ENCODE measurements at regions of chr2 and their contacts with region 1.

Region 1: DNA sequence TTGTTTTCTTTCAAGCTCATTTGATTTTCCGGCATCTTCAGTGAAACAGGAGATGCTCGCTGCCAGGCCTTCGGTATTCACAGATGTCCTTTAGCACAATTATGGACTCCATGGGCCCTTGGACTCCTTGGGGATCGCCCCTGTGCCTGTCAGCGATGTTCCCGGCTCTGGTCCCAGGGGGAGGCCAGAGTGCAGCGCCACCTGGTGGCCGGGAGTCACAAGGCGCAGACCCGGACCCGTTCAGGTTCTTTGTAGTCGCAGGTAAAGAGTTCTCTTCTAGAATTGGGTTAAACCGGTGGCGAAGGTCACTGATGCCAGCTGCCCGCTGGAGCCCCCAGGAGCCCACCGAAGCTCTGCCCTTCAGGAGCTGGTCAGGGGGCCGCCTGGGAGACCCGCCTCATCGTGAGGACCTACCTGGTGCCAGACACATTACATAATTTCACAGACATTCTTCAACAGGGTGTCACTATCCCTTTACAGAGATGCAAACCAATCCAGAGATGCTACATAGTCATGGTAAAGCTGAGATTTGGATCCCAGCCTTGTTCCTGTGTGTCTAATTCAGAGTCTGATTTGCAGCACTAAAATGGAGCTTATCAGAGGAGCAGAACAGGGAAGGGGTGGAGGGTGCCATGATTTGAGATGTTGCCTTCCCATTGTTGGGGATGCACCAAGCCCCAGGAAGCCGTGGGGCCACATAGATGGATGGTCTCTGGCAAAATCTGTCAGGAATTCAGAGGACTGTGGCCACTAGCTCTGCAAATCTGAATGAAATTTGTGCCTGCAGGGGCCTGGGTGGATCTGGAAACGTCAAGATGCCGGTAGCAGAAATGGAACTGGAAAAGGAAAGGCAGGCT is 6.0 kb upstream of the INPP5D start:
- DNase-seq: peak; percentile 34
- H3K4me3 ChIP-seq: no peak overlapping the region
- H3K27ac ChIP-seq: no peak overlapping the region
- H3K4me1 ChIP-seq: peaks cover 4% of the 10 kb centered on the region
- H3K27me3 ChIP-seq: no peaks in the 10 kb centered on the region
- CTCF ChIP-seq: peak; percentile 95 to 98
- POLR2A ChIP-seq: no peak

Region 2: DNA sequence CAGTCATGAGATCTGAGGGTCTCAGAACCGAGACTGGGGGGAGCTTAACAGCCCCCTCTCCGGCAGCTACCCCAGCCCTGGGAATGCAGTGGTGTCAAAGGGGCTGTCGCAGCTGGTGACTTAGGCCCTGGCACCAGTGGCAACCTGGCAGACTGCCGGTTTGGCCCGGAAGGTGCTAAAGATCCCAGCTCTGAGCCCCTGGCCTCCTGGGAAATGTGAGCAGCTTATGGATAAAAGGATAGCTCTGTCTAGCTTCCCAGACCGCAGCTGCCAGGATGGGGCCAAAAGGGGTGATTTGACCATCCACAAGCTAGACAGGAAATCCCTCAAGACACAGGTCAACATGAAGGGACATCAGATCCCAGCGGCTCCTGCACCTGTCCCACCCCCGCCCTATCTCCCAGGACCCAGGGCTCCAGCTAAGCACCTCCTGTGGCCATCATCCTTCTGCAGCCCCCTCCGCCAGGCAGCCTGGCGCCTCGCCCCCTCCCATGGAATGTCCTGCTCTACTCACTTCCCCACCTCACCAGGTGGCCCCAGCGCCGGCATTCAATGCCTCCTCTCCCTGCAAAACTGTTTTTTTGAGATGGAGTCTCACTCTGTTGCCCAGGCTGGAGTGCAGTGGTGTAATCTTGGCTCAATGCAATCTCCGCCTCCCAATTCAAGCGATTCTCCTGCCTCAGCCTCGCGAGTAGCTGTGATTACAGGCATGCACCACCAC is 453.9 kb before region 1 on chr2:
- CTCF ChIA-PET with region 1: no interaction called
- POLR2A ChIA-PET with region 1: no interaction called
- dilution Hi-C with region 1: no loop called
- intact Hi-C with region 1: loop called (anchors 10 kb)
- DNase-seq: no peak
- H3K4me3 ChIP-seq: no peak overlapping the region
- H3K27ac ChIP-seq: no peak overlapping the region
- H3K4me1 ChIP-seq: no peaks in the 10 kb centered on the region
- H3K27me3 ChIP-seq: peaks cover 0 to 2% of the 10 kb centered on the region in 2 experiments
- CTCF ChIP-seq: no peak
- POLR2A ChIP-seq: no peak

Region 3: DNA sequence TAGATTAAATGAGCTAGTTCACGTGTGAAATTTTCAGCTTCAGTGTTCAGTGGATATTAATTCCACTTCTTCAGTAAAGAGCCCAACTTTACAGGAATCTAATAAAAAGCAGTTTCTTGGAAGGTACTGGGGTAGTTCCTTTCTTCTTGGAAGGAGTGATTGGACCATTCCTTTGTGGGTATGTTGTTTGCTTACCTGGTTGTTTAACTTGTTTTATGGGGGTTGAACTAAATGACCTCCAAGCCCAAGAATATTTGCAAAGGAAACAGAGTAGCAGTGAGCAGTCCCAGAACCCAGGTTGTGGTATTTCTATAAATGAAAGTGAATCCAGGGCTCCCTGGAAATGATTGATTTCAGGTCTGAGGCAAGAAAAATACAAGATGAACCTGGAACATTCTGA is 309.2 kb before region 1 on chr2:
- CTCF ChIA-PET with region 1: no interaction called
- POLR2A ChIA-PET with region 1: no interaction called
- dilution Hi-C with region 1: no loop called
- intact Hi-C with region 1: no loop called
- DNase-seq: no peak
- H3K4me3 ChIP-seq: no peak overlapping the region
- H3K27ac ChIP-seq: no peak overlapping the region
- H3K4me1 ChIP-seq: no peaks in the 10 kb centered on the region
- H3K27me3 ChIP-seq: no peaks in the 10 kb centered on the region
- CTCF ChIP-seq: no peak
- POLR2A ChIP-seq: no peak

Region 4: DNA sequence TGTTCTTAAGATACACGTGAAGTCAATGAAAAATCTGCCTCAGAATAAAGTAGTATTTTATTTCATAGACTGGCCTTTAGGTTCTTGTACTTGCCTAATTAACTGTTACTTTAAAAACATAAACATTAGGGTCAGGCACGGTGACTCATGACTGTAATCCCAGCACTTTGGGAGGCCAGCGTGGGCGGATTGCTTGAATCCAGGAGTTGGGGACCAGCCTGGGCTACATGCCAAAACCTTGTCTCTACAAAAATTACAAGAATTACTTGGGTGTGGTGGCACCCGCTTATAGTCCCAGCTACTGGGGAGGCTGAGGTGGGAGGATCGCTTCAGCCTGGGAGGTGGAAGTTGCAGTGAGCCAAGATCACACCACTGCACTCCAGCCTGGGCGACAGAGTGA is 200.1 kb before region 1 on chr2:
- CTCF ChIA-PET with region 1: interaction called, 18 read pairs
- POLR2A ChIA-PET with region 1: no interaction called
- dilution Hi-C with region 1: no loop called
- intact Hi-C with region 1: loop called (anchors 1 kb)
- DNase-seq: peak; percentile 68
- H3K4me3 ChIP-seq: no peak overlapping the region
- H3K27ac ChIP-seq: no peak overlapping the region
- H3K4me1 ChIP-seq: peaks cover 8% of the 10 kb centered on the region
- H3K27me3 ChIP-seq: no peaks in the 10 kb centered on the region
- CTCF ChIP-seq: no peak
- POLR2A ChIP-seq: no peak

Region 5: GRCh38 chr2:232887171-232887850 is 166.8 kb before region 1 on chr2:
- CTCF ChIA-PET with region 1: interaction called, 7 read pairs
- POLR2A ChIA-PET with region 1: no interaction called
- dilution Hi-C with region 1: no loop called
- intact Hi-C with region 1: loop called (anchors 10 kb)
- DNase-seq: no peak
- H3K4me3 ChIP-seq: no peak overlapping the region
- H3K27ac ChIP-seq: no peak overlapping the region
- H3K4me1 ChIP-seq: no peaks in the 10 kb centered on the region
- H3K27me3 ChIP-seq: no peaks in the 10 kb centered on the region
- CTCF ChIP-seq: peak in 1 of 2 donors; percentile 4
- POLR2A ChIP-seq: no peak

Region 6: GRCh38 chr2:232979871-232980461 is 74.2 kb before region 1 on chr2:
- CTCF ChIA-PET with region 1: interaction called, 11 read pairs
- POLR2A ChIA-PET with region 1: no interaction called
- dilution Hi-C with region 1: no loop called
- intact Hi-C with region 1: no loop called
- DNase-seq: no peak
- H3K4me3 ChIP-seq: no peak overlapping the region
- H3K27ac ChIP-seq: no peak overlapping the region
- H3K4me1 ChIP-seq: no peaks in the 10 kb centered on the region
- H3K27me3 ChIP-seq: peaks cover 0 to 2% of the 10 kb centered on the region in 2 experiments
- CTCF ChIP-seq: no peak
- POLR2A ChIP-seq: no peak

Region 7: DNA sequence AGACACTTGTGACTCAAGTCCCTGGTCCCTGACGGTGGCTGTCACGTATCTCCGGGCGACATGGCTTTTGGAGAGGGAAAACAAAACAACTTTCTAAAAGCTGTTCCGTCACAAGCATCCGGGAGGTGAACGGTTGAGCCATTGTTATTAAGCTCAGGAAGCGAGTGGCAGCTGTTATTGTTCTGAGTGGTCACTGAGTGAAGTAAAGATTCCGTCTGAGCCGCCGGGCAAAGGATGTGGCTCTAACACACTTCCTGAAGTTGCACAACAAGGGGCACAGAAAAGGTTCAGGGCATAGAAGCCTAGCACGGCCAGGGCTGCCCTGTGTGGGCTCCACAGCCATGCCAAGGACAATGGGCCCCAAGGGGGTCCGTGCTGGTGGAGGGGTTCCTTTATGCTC is 30.3 kb after region 1 on chr2:
- CTCF ChIA-PET with region 1: interaction called, 16 read pairs
- POLR2A ChIA-PET with region 1: no interaction called
- dilution Hi-C with region 1: no loop called
- intact Hi-C with region 1: no loop called
- DNase-seq: peak; percentile 96
- H3K4me3 ChIP-seq: peak overlapping the region in 1 of 3 experiments; percentile 3
- H3K27ac ChIP-seq: peak overlapping the region; percentile 94
- H3K4me1 ChIP-seq: peaks cover 40% of the 10 kb centered on the region
- H3K27me3 ChIP-seq: no peaks in the 10 kb centered on the region
- CTCF ChIP-seq: no peak
- POLR2A ChIP-seq: peak; percentile 42

Region 8: DNA sequence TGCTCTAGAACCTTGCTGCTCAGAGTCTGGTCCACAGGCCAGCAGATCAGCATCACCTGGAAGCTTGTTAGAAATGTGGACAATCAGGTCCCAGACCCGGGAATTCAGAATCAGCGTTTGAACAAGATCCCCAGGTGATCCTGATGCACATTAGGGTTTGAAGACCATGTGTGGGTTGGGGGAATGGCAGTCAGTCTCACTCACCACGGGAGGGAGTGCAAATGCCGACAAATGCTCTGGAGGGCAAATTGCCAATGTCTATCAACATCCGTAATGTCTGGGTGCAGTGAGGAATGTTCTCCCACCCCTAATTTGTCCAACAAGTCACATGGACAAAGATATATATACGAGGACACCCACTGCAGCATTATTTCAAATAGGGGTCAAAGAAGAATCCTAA is 40.5 kb after region 1 on chr2:
- CTCF ChIA-PET with region 1: no interaction called
- POLR2A ChIA-PET with region 1: no interaction called
- dilution Hi-C with region 1: no loop called
- intact Hi-C with region 1: no loop called
- DNase-seq: no peak
- H3K4me3 ChIP-seq: no peak overlapping the region
- H3K27ac ChIP-seq: no peak overlapping the region
- H3K4me1 ChIP-seq: no peaks in the 10 kb centered on the region
- H3K27me3 ChIP-seq: no peaks in the 10 kb centered on the region
- CTCF ChIP-seq: no peak
- POLR2A ChIP-seq: no peak

Measured in endothelial cell of umbilical vein (primary cell).